A549 (cell line): ENCODE measurements at regions of chr2 and their contacts with region 1.

Region 1: DNA sequence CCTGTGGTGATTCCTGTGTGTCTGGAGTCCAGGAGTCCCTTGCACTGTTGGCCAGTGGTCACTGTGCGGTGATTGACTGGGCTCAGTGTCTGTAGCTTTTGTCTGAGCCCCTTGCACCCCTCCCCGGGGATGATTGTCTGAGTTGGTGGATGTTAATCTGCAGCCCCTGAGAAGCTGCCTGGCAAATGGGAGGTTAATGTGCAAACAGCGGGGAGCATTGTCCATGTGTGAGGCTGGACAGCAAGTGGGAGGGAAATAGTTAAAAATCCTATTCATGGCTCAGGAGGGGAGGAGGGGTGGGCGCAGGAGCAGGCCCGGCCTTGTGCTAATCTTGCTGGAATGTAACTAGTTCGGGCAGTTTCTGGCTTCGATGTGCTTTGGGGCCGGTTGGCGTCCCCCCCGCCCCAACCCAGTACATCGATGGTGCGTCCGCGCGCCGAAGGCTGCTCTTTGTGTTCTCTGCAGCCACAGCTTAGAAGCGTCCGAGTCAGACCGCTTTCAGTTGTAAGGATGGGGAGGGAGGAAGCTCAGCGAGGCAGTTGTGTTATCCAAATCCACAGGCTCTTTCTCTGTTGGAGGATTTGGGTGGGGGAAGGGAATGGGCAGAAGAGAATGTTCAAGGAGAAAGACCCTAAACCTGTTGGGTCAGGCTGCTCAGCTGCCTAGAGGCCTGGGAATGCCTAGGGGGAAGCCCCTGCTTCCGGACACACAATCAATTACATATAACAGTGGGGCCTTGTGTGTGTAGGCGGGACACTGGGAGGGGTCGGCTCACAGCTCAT is 71.8 kb downstream of the TGOLN2 start:
- DNase-seq: no peak
- ATAC-seq: no peak
- H3K4me3 ChIP-seq: no peak overlapping the region
- H3K27ac ChIP-seq: no peak overlapping the region
- H3K4me1 ChIP-seq: no peaks in the 10 kb centered on the region; the same call in 2 of the 3 replicates
- CTCF ChIP-seq: no peak
- EP300 ChIP-seq: no peak
- POLR2A ChIP-seq: no peak
- RAD21 ChIP-seq: no peak

Region 2: GRCh38 chr2:85282914-85283313 is 26.9 kb after region 1 on chr2:
- CTCF ChIA-PET with region 1: interaction called, 33 read pairs
- POLR2A ChIA-PET with region 1: no interaction called
- DNase-seq: no peak
- ATAC-seq: no peak
- H3K4me3 ChIP-seq: no peak overlapping the region
- H3K27ac ChIP-seq: no peak overlapping the region
- H3K4me1 ChIP-seq: peaks cover 15% of the 10 kb centered on the region
- CTCF ChIP-seq: no peak
- EP300 ChIP-seq: no peak
- POLR2A ChIP-seq: no peak
- RAD21 ChIP-seq: no peak